Endothelial cell of umbilical vein (primary cell): ENCODE measurements at regions of chr16 and their contacts with region 1.

Region 1: GRCh38 chr16:80526425-80527061 is 14.2 kb upstream of the DYNLRB2 start:
- DNase-seq: peak; percentile 66
- H3K4me3 ChIP-seq: no peak overlapping the region
- H3K27ac ChIP-seq: no peak overlapping the region
- H3K4me1 ChIP-seq: no peaks in the 10 kb centered on the region
- H3K27me3 ChIP-seq: peaks cover 6 to 26% of the 10 kb centered on the region in 2 experiments
- CTCF ChIP-seq: peak; percentile 63 to 75
- POLR2A ChIP-seq: no peak

Region 2: DNA sequence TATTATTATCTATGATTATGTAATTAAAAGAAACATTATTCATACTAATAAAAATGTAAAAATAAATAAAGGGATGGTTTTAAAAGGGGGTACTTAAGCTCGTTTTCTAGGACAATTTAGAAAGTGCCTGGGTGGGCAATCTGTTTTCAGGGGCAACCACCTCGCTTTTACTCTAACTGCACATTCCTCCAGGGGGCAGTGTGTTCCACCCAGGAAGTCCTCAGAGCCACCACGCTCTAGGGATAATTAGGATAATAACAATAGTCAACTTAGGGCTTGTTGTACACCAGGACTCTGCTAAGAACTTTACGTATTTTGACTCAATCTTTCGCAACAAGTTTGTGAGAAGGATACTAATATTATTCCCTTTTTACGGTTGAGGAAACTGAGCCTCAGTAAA is 529.3 kb before region 1 on chr16:
- CTCF ChIA-PET with region 1: interaction called, 3 read pairs
- POLR2A ChIA-PET with region 1: no interaction called
- dilution Hi-C with region 1: no loop called
- intact Hi-C with region 1: loop called (anchors 1 kb)
- DNase-seq: peak; percentile 3
- H3K4me3 ChIP-seq: no peak overlapping the region
- H3K27ac ChIP-seq: no peak overlapping the region
- H3K4me1 ChIP-seq: no peaks in the 10 kb centered on the region
- H3K27me3 ChIP-seq: no peaks in the 10 kb centered on the region
- CTCF ChIP-seq: peak in 1 of 2 donors; percentile 26
- POLR2A ChIP-seq: no peak

Region 3: GRCh38 chr16:80210787-80211186 is 315.8 kb before region 1 on chr16:
- CTCF ChIA-PET with region 1: no interaction called
- POLR2A ChIA-PET with region 1: no interaction called
- dilution Hi-C with region 1: no loop called
- intact Hi-C with region 1: no loop called
- DNase-seq: no peak
- H3K4me3 ChIP-seq: no peak overlapping the region
- H3K27ac ChIP-seq: no peak overlapping the region
- H3K4me1 ChIP-seq: no peaks in the 10 kb centered on the region
- H3K27me3 ChIP-seq: no peaks in the 10 kb centered on the region
- CTCF ChIP-seq: no peak
- POLR2A ChIP-seq: no peak

Region 4: GRCh38 chr16:80540516-80541272 is 14.2 kb after region 1 on chr16 and contains the start of gene DYNLRB2:
- CTCF ChIA-PET with region 1: interaction called, 26 read pairs
- POLR2A ChIA-PET with region 1: no interaction called
- dilution Hi-C with region 1: no loop called
- intact Hi-C with region 1: no loop called
- DNase-seq: peak; percentile 89
- H3K4me3 ChIP-seq: peak within 1 kb of the TSS; percentile 55 to 84 (median 61)
- H3K27ac ChIP-seq: peak within 1 kb of the TSS; percentile 59
- H3K4me1 ChIP-seq: peaks cover 10% of the 10 kb centered on the region
- H3K27me3 ChIP-seq: peaks cover 2 to 22% of the 10 kb centered on the region in 2 experiments
- CTCF ChIP-seq: no peak
- POLR2A ChIP-seq: peak; percentile 66
- total RNA-seq, gene DYNLRB2: not detected in 2 replicates

Region 5: GRCh38 chr16:80824718-80825364 is 298.3 kb after region 1 on chr16:
- CTCF ChIA-PET with region 1: interaction called, 91 read pairs
- POLR2A ChIA-PET with region 1: no interaction called
- dilution Hi-C with region 1: no loop called
- intact Hi-C with region 1: loop called (anchors 1 kb)
- DNase-seq: peak; percentile 79
- H3K4me3 ChIP-seq: no peak overlapping the region
- H3K27ac ChIP-seq: no peak overlapping the region
- H3K4me1 ChIP-seq: no peaks in the 10 kb centered on the region
- H3K27me3 ChIP-seq: no peaks in the 10 kb centered on the region
- CTCF ChIP-seq: peak; percentile 52 to 56
- POLR2A ChIP-seq: no peak

Region 6: GRCh38 chr16:80852261-80852872 is 325.8 kb after region 1 on chr16:
- CTCF ChIA-PET with region 1: interaction called, 55 read pairs
- POLR2A ChIA-PET with region 1: no interaction called
- dilution Hi-C with region 1: no loop called
- intact Hi-C with region 1: loop called (anchors 1 kb)
- DNase-seq: peak; percentile 53
- H3K4me3 ChIP-seq: no peak overlapping the region
- H3K27ac ChIP-seq: no peak overlapping the region
- H3K4me1 ChIP-seq: no peaks in the 10 kb centered on the region
- H3K27me3 ChIP-seq: peaks cover 11 to 12% of the 10 kb centered on the region in 2 experiments
- CTCF ChIP-seq: peak; percentile 60 to 66
- POLR2A ChIP-seq: no peak